ENCODE measurements at regions of chr2 and their contacts with region 1.

Region 1: GRCh38 chr2:85066874-85067351 is 66.3 kb upstream of the TCF7L1 start:
- DNase-seq: peak; percentile 84
- ATAC-seq: peak; percentile 94

Region 2: GRCh38 chr2:85288244-85288725 is 221.4 kb after region 1 on chr2:
- intact Hi-C with region 1: loop called (anchors 5 kb)
- DNase-seq: no peak
- ATAC-seq: no peak

Region 3: DNA sequence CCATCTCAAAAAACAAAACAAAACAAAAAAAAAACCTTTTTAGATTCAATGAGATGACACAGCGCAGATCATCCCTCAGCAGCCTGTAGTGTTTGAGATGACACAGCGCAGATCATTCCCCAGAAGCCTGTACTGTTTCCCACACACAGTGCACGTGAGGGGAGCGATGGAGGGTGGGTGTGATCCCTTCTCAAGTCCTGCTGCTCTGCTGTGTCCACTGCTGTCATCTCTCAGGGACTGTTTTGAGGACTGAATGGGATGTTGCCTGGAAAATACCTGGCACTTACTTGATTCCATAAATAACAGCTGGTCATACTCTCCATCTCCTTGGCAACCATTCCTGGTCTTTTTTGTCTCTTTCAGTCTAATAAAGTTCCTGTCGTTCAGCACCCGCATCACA is 235.2 kb after region 1 on chr2:
- intact Hi-C with region 1: loop called (anchors 2 kb)
- DNase-seq: no peak
- ATAC-seq: peak; percentile 36